AG04450 (cell line): ENCODE measurements at regions of chr16 and their contacts with region 1.

Region 1: DNA sequence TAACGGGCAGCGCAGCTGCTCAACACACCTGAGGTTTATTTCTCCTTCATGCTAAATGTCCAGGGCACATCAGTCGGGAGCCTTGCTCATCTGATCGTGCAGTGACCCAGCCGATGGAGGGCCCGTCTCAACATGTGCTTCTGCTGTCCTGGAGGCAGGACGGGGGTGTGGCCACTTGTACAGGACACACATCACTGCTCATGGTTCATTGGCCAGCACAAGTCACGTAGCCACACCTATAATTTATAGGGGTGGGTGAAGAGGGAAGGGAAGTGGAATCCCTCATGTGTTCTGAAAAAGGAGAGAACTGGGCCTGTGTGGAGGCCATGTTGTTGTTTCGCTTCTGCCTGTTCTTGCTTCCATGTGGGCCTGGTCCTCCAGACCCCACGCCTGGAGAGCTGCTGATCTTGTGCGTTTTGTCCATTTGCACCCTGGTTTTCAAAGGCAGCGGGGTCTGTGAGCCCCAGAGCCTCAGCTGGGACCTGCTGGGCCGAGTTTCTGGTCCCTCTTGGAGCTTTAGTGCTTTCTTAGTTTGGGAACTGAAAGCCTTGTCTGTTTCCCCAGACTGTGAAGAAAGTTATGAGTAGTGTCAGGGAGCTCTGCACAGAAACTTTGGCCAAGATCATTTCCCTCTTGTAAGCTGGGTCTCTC is 60.5 kb downstream of the CMIP start:
- DNase-seq: no peak
- H3K4me3 ChIP-seq: no peak overlapping the region
- H3K27ac ChIP-seq: no peak overlapping the region
- H3K27me3 ChIP-seq: no peaks in the 10 kb centered on the region
- CTCF ChIP-seq: no peak

Region 2: DNA sequence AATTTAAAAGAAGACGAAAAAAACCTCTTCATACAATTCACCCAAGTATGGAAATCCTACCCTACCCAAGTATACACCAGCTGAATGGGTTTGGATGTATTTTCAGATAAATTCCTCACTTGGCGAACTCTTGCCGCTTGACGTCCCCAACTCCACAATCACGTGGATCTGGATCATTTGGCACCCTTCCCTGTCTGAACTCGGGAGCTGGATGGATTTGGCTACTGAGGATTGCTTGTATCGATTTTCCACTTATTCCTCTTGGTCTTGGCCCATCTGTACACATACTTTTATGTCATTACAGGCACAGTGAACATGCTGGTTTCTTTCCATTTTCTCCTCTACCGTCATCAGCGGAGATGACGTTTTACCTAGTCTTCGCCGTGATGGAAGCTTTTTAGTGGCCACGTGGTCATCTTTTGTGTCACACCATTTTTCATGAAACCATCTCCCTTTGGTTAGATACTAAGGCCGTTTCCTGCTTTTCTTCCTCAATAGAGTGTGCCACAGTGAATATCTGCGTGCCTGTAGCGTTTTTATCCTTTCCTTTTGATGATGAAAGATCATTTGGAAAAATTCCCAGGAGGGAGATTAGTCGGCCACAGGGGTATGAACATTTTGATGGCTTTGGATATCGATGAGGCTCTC is 13.5 kb before region 1 on chr16:
- CTCF ChIA-PET with region 1: no interaction called
- POLR2A ChIA-PET with region 1: interaction called, 18 read pairs
- DNase-seq: no peak
- H3K4me3 ChIP-seq: no peak overlapping the region
- H3K27ac ChIP-seq: no peak overlapping the region
- H3K27me3 ChIP-seq: no peaks in the 10 kb centered on the region
- CTCF ChIP-seq: no peak